Activated CD4-positive, alpha-beta T cell treated with anti-CD3 and anti-CD28 coated beads, Interleukin-2, amount 10 ng/mL, durations not matched to agents 7 days and 5 days (primary cell): ENCODE measurements at regions of chr19 and their contacts with region 1.

Region 1: DNA sequence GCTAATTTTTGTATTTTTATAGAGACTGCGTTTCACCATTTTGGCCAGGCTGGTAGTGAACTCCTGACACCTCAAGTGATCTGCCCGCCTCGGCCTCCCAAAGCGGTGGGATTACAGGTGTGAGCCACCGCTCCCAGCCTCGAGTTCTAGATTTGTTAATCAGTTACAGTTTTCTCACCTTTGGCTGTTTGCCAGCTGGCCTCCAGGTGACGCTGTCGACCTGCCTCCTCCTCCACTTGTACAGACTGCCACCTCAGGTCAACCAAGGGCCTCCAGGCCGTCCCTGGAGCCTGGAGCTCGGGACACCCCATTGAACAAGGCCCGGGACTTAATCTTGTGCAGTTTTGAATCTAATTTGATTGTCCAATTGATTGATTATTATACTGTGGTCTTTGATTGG is 45.5 kb downstream of the IER2 start:
- DNase-seq: peak; percentile 55
- H3K4me3 Mint-ChIP-seq: no peak overlapping the region
- H3K27ac Mint-ChIP-seq: peak overlapping the region; percentile 25
- H3K4me1 Mint-ChIP-seq: peaks cover 29% of the 10 kb centered on the region
- H3K27me3 Mint-ChIP-seq: no peaks in the 10 kb centered on the region

Region 2: GRCh38 chr19:13162518-13163314 is 33.0 kb before region 1 on chr19:
- CTCF ChIA-PET with region 1: interaction called, 15 read pairs
- POLR2A ChIA-PET with region 1: no interaction called
- DNase-seq: peak; percentile 94
- H3K4me3 Mint-ChIP-seq: peak overlapping the region; percentile 91
- H3K27ac Mint-ChIP-seq: peak overlapping the region; percentile 98
- H3K4me1 Mint-ChIP-seq: peaks cover 68% of the 10 kb centered on the region
- H3K27me3 Mint-ChIP-seq: no peaks in the 10 kb centered on the region

Region 3: GRCh38 chr19:13169810-13170209 is 25.9 kb before region 1 on chr19:
- CTCF ChIA-PET with region 1: interaction called, 15 read pairs
- POLR2A ChIA-PET with region 1: no interaction called
- DNase-seq: no peak
- H3K4me3 Mint-ChIP-seq: no peak overlapping the region
- H3K27ac Mint-ChIP-seq: peak overlapping the region; percentile 98
- H3K4me1 Mint-ChIP-seq: peaks cover 84% of the 10 kb centered on the region
- H3K27me3 Mint-ChIP-seq: no peaks in the 10 kb centered on the region

Region 4: GRCh38 chr19:13181747-13182388 is 13.8 kb before region 1 on chr19:
- CTCF ChIA-PET with region 1: interaction called, 26 read pairs
- POLR2A ChIA-PET with region 1: no interaction called
- DNase-seq: no peak
- H3K4me3 Mint-ChIP-seq: no peak overlapping the region
- H3K27ac Mint-ChIP-seq: peak overlapping the region; percentile 6
- H3K4me1 Mint-ChIP-seq: peaks cover 33% of the 10 kb centered on the region
- H3K27me3 Mint-ChIP-seq: no peaks in the 10 kb centered on the region

Region 5: DNA sequence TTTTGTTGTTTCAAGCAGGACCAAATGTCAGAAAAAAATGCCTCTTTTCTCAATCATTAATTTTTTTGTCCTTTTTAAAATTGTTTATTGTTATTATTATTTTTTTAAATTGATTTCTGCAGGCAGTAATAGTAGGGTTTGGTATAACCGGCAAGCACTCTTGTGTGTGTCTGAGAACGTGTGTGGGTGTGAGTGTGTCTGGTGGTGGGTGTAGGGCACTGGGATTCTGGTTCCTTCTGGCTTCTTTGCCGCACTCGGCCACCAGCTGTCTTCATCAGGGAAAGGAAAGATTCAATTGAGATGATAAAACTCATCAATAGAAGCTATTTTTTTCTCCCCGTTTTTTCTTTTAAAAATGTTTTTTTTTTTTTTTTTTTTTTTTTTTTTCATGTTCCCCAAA is 10.9 kb after region 1 on chr19:
- CTCF ChIA-PET with region 1: interaction called, 11 read pairs
- POLR2A ChIA-PET with region 1: no interaction called
- DNase-seq: no peak
- H3K4me3 Mint-ChIP-seq: peak overlapping the region; percentile 53
- H3K27ac Mint-ChIP-seq: peak overlapping the region; percentile 78
- H3K4me1 Mint-ChIP-seq: peaks cover 17% of the 10 kb centered on the region
- H3K27me3 Mint-ChIP-seq: no peaks in the 10 kb centered on the region

Region 6: DNA sequence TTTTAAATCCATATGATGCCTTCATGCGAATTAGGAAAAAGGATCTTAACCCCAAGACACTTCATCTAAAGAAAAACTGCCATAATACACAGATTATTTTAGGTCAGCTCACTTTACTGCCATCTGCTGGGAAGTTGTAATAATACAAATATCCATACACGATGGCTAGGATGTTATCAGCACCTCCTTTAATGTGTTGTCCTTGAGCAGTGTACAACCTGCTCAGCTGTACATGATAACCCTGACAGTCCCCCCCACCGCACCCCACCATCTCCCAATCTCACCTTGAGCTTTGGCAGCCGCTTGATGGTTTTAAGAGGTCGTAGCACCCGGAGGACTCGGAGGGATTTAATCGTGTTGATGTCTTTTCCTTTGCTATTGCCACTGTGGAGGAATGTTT is 66.8 kb after region 1 on chr19:
- CTCF ChIA-PET with region 1: interaction called, 18 read pairs
- POLR2A ChIA-PET with region 1: no interaction called
- DNase-seq: peak; percentile 28
- H3K4me3 Mint-ChIP-seq: no peak overlapping the region
- H3K27ac Mint-ChIP-seq: no peak overlapping the region
- H3K4me1 Mint-ChIP-seq: peaks cover 13% of the 10 kb centered on the region
- H3K27me3 Mint-ChIP-seq: peaks cover 21% of the 10 kb centered on the region